Gastrocnemius medialis (tissue), 4 donors: ENCODE measurements at regions of chr20 and their contacts with region 1.

Region 1: DNA sequence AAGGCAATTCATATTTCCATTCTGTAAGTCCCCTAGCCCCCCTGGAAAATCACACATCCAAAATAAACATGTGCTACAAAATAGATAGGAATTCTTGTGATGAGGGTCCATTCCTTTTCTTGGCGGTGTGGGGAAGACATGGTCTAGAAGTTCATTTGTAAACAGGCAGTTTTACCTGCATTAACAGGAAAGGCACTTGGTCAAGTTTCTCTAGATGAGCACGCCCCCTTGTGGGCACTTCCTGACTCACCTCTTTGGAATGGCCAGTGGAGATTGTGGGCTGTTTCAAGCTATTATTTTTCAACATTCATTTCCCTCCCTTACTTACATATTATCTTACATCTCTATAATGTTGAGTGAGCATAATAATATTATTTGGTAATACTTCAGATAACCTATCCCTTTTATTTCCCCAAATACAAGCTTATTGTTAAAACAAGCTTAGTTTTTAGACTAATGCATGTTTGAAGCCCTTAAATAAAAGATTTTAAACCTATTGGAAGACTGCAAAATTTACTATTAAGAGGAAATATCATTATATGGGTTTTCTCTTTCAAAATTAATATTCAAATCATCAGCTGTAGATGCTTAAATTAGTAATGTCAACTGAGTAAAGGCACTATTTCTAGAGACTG is 92.1 kb downstream of the TASP1 start:
- DNase-seq: peak; percentile 6 to 31
- ATAC-seq: peak in 1 of 2 donors; percentile 53
- H3K4me3 ChIP-seq: no peak overlapping the region
- H3K27ac ChIP-seq: no peak overlapping the region
- H3K4me1 ChIP-seq: no peaks in the 10 kb centered on the region
- H3K27me3 ChIP-seq: no peaks in the 10 kb centered on the region
- CTCF ChIP-seq: peak; percentile 22 to 67 (median 51)
- POLR2A ChIP-seq: no peak

Region 2: DNA sequence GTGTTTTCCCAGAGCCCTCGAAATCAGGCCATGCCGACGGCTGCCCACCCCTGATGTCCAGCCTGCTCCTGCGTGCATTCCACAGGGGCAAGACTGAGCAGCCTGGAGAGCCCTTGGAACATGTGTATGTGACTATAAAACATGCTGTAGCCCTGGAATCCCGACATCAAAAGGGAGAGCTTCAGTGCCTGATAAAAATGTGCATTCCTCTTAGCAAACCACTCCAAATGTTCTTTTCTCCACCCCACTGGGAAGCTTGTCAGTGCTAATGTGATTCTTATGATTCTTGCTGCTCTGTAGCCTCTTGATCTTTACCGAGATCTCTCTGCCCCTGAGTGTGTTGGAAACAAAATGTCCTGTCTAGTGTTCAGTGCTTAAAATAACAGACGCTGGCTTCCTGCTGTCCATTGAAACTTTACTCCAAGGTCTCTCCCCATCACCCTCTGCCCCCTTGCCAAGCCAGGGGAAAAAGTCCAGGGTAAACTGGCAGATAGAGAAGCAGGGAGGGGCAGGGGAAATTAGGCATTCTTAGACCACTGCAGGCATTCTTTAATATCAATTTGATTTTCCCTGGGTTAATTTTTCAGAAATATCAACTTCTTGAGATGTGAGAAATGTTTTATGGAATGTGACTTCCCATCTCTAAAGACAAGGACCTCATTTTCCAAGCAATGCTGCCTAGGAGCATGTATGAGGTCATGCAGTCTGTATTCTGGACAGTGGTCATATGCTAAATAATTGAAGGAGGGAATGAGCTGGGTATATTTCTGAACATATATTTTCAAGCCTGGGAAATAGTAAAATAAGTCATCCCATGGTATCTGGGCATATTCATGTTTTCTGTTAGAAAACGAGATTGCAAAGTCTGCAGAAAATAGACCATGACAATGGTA is 399.3 kb before region 1 on chr20:
- in situ Hi-C with region 1: loop called in 1 of 4 experiments (anchors 25 kb)
- intact Hi-C with region 1: no loop called
- DNase-seq: peak; percentile 23 to 31
- ATAC-seq: peak; percentile 92 to 94
- H3K4me3 ChIP-seq: peak overlapping the region in 2 of 4 donors; percentile 5 to 20
- H3K27ac ChIP-seq: peak overlapping the region; percentile 54 to 83 (median 78)
- H3K4me1 ChIP-seq: peaks cover 28% of the 10 kb centered on the region in 2 donors
- H3K27me3 ChIP-seq: no peaks in the 10 kb centered on the region
- CTCF ChIP-seq: no peak
- POLR2A ChIP-seq: no peak

Region 3: DNA sequence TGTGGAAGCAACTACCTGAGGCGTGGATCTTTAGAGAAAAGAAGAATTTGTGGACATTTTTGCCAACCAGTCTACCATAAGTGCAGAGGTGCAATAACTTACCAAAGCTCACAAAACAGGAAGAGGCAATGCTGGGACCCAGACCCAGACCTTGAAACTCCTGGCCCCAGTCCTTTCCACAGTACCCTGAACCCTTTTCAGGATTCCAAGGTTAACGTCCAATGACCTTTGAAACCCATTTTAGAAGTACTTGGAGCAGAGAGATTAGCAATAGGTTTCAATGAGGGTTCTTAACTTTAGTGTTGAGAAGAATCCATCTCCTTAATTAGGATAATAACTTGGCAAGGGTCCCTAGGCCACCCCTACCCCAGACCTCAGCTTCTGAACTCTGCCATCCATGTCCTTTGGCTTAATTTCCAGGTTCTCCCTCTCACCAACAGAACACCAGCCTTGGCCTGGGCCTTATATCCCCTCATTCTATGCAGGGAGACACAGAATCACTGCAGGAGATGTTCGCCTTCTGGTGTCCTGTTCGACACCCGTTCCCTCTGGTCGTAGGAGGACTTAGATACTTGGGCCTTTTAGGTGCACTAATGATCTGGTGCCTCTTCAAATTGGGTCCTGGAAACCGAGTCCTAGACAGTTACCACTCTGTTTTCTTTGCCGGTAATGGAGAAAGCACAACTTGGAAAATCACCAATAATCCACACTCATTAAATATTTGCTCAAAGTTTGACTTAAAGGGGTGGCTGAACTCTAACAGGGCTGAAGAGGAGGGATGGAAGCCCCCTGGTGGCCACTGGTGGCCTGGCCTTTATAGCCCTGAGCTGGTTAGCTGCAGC is 284.9 kb before region 1 on chr20:
- in situ Hi-C with region 1: loop called in 1 of 4 experiments (anchors 25 kb)
- intact Hi-C with region 1: no loop called
- DNase-seq: peak in 1 of 2 donors; percentile 23
- ATAC-seq: peak in 1 of 2 donors; percentile 39
- H3K4me3 ChIP-seq: no peak overlapping the region
- H3K27ac ChIP-seq: no peak overlapping the region
- H3K4me1 ChIP-seq: no peaks in the 10 kb centered on the region
- H3K27me3 ChIP-seq: no peaks in the 10 kb centered on the region
- CTCF ChIP-seq: peak in 3 of 5 experiments; percentile 42 to 70 (median 65)
- POLR2A ChIP-seq: no peak

Region 4: DNA sequence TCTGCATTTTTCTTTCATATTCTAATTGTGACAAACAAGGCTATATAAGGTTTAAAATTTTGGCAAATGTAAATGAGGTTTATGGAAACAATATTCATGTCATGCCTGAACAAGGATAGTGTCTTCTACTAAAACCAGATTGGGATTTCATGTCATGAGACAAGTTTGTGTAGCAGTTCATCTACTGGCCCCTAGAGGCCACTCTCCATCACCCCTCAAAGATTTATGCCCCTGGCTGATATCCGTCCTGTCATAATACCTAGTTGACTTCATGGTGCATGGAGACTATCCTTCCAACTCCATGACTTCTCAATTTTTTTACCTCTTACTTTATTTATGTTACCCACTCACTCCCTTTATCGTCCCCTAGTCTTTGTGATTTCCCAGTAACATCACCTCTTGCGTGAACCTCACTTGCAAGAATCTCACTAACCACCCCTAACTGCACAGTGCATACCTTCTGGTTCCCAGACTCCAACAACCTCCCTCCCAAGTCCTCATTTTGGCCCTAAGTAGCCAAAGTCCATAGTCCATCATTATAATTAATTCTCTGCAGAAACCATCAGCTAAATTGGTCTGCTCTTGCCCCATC is 87.7 kb before region 1 on chr20:
- in situ Hi-C with region 1: no loop called
- intact Hi-C with region 1: loop called (anchors 5 kb)
- DNase-seq: peak in 1 of 2 donors; percentile 12
- ATAC-seq: no peak
- H3K4me3 ChIP-seq: no peak overlapping the region
- H3K27ac ChIP-seq: no peak overlapping the region
- H3K4me1 ChIP-seq: no peaks in the 10 kb centered on the region
- H3K27me3 ChIP-seq: no peaks in the 10 kb centered on the region
- CTCF ChIP-seq: peak in 3 of 5 experiments; percentile 40 to 47 (median 43)
- POLR2A ChIP-seq: no peak

Region 5: GRCh38 chr20:13755809-13756208 is 209.2 kb after region 1 on chr20:
- in situ Hi-C with region 1: no loop called
- intact Hi-C with region 1: loop called (anchors 5 kb)
- DNase-seq: no peak
- ATAC-seq: no peak
- H3K4me3 ChIP-seq: no peak overlapping the region
- H3K27ac ChIP-seq: no peak overlapping the region
- H3K4me1 ChIP-seq: no peaks in the 10 kb centered on the region
- H3K27me3 ChIP-seq: no peaks in the 10 kb centered on the region
- CTCF ChIP-seq: no peak
- POLR2A ChIP-seq: no peak